ENCODE measurements at regions of chr6 and their contacts with region 1.

Region 1: GRCh38 chr6:20483897-20484497 is 50.3 kb upstream of the CDKAL1 start:
- DNase-seq: peak; percentile 44 to 69 (median 65)
- H3K4me3 ChIP-seq: peak overlapping the region; percentile 6 to 68 (median 10)
- H3K4me3 Mint-ChIP-seq: peak overlapping the region; percentile 46 to 85
- H3K27ac ChIP-seq: peak overlapping the region; percentile 40 to 80
- H3K27ac Mint-ChIP-seq: peak overlapping the region; percentile 85 to 96 (median 90)
- H3K4me1 ChIP-seq: peaks cover 41% of the 10 kb centered on the region in 2 donors
- H3K4me1 Mint-ChIP-seq: peaks cover 63% of the 10 kb centered on the region
- H3K27me3 ChIP-seq: no peaks in the 10 kb centered on the region
- H3K27me3 Mint-ChIP-seq: peaks cover 0 to 2% (median 0%) of the 10 kb centered on the region in 3 donors
- CTCF ChIP-seq: peak; percentile 19

Region 2: GRCh38 chr6:20071998-20072397 is 412.0 kb before region 1 on chr6:
- intact Hi-C with region 1: no loop called
- DNase-seq: no peak
- H3K4me3 ChIP-seq: no peak overlapping the region
- H3K4me3 Mint-ChIP-seq: no peak overlapping the region
- H3K27ac ChIP-seq: no peak overlapping the region
- H3K27ac Mint-ChIP-seq: no peak overlapping the region
- H3K4me1 ChIP-seq: no peaks in the 10 kb centered on the region
- H3K4me1 Mint-ChIP-seq: peaks cover 5% of the 10 kb centered on the region
- H3K27me3 ChIP-seq: no peaks in the 10 kb centered on the region
- H3K27me3 Mint-ChIP-seq: peaks cover 4 to 5% (median 4%) of the 10 kb centered on the region in 3 donors
- CTCF ChIP-seq: no peak

Region 3: DNA sequence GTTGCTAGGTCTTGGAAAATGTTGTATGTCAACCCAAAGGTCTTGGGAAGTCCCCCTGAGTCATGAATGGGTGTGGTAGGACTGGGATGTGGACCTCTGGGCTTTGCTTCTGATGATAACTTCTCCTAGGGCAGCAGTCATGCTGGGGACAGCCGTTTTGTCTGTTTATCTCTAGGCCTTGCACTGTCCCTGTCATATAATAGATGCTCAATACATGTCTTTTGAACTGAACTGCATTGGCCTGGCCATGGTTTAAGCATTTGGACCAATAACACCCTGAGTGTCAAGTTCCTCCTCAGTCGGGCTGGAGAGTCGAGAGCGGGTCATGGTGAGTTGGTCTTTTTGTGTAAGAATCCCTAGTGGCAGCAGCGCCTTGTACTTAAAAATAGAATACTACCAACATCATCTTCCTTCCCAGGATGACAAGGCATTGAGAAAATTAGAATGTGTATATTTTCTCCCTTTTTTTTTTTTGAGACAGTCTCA is 39.2 kb before region 1 on chr6:
- intact Hi-C with region 1: loop called in 1 of 2 experiments (anchors 5 kb)
- DNase-seq: peak; percentile 81 to 95 (median 83)
- H3K4me3 ChIP-seq: no peak overlapping the region
- H3K4me3 Mint-ChIP-seq: peak overlapping the region in 1 of 2 donors; percentile 70
- H3K27ac ChIP-seq: peak overlapping the region; percentile 76 to 88
- H3K27ac Mint-ChIP-seq: peak overlapping the region; percentile 91 to 99 (median 96)
- H3K4me1 ChIP-seq: peaks cover 48 to 52% of the 10 kb centered on the region in 2 donors
- H3K4me1 Mint-ChIP-seq: peaks cover 72% of the 10 kb centered on the region
- H3K27me3 ChIP-seq: no peaks in the 10 kb centered on the region
- H3K27me3 Mint-ChIP-seq: no peaks in the 10 kb centered on the region
- CTCF ChIP-seq: no peak

Region 4: GRCh38 chr6:20467437-20467836 is 16.6 kb before region 1 on chr6:
- intact Hi-C with region 1: no loop called
- DNase-seq: no peak
- H3K4me3 ChIP-seq: no peak overlapping the region
- H3K4me3 Mint-ChIP-seq: no peak overlapping the region
- H3K27ac ChIP-seq: peak overlapping the region in 1 of 2 donors; percentile 39
- H3K27ac Mint-ChIP-seq: peak overlapping the region in 4 of 7 donors; percentile 38 to 73 (median 63)
- H3K4me1 ChIP-seq: peaks cover 17 to 18% of the 10 kb centered on the region in 2 donors
- H3K4me1 Mint-ChIP-seq: peaks cover 42% of the 10 kb centered on the region
- H3K27me3 ChIP-seq: no peaks in the 10 kb centered on the region
- H3K27me3 Mint-ChIP-seq: peaks cover 0 to 7% (median 1%) of the 10 kb centered on the region in 3 donors
- CTCF ChIP-seq: no peak

Region 5: DNA sequence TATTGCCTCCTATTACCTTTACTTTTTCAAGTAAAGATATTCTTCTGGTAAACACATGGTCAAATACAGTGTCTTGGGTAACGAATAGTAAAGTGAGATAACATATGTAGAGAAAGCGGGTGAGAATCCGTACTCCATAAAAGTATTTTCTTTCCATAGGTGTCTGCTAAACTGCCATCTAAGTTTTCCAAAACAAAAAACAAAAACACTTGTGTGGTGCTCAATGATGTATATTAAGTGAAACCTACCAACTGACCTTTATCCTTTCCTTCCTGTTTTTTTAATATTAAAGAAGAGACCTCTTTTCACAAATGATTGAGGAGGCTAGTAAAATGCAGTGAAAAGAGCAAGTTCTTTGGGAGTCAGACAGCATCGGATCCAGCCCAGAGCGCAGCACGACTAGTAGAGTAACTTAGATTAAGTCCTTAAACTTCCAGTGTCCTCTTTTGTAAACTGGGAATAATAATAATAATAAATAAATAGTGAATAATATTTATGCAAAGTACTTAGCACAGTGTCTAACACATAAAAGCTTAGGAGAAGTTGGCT is 49.8 kb after region 1 on chr6:
- intact Hi-C with region 1: no loop called
- DNase-seq: no peak
- H3K4me3 ChIP-seq: peak overlapping the region; percentile 76 to 98 (median 88)
- H3K4me3 Mint-ChIP-seq: peak overlapping the region; percentile 59 to 96
- H3K27ac ChIP-seq: peak overlapping the region; percentile 89 to 94
- H3K27ac Mint-ChIP-seq: peak overlapping the region in 4 of 7 donors; percentile 63 to 91 (median 74)
- H3K4me1 ChIP-seq: peaks cover 11 to 25% of the 10 kb centered on the region in 2 donors
- H3K4me1 Mint-ChIP-seq: peaks cover 14% of the 10 kb centered on the region
- H3K27me3 ChIP-seq: no peaks in the 10 kb centered on the region
- H3K27me3 Mint-ChIP-seq: peaks cover 0 to 1% (median 0%) of the 10 kb centered on the region in 3 donors
- CTCF ChIP-seq: no peak